ENCODE measurements at regions of chr10 and their contacts with region 1.

Region 1: GRCh38 chr10:91088300-91089140 is 131.9 kb upstream of the PCGF5 start:
- DNase-seq: no peak
- H3K4me3 ChIP-seq: no peak overlapping the region
- H3K27ac ChIP-seq: no peak overlapping the region
- H3K4me1 ChIP-seq: no peaks in the 10 kb centered on the region
- H3K27me3 ChIP-seq: no peaks in the 10 kb centered on the region
- CTCF ChIP-seq: no peak
- EP300 ChIP-seq: no peak
- POLR2A ChIP-seq: no peak
- RAD21 ChIP-seq: peak in 1 of 2 experiments; percentile 33; a peak in 3 of 4 replicates

Region 2: DNA sequence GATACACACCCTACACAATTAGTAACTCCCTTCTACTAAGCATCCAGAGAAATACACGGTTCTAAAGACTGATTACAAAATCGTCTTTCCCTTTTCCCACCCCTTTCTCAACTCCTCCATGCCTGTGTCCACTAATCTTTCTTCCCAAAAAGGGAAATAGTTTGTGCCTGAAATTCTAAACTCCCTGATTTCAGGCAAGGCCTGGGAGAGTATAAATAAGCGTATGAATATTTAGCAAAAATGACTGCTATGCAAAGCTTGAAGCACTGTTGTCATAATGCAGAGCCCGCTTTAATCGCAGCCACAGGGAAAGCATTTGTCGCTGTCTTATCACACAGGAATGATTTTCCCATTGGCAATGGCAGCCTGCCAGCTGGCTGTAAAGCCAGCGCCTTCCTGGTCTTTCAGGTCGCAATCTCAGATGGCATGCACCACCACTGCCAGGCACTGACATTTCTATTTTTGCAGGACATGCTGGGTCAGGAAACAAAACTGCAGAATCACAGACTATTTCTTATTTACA is 10.9 kb before region 1 on chr10:
- CTCF ChIA-PET with region 1: interaction called, 11 read pairs
- POLR2A ChIA-PET with region 1: no interaction called
- DNase-seq: no peak
- H3K4me3 ChIP-seq: no peak overlapping the region
- H3K27ac ChIP-seq: no peak overlapping the region
- H3K4me1 ChIP-seq: no peaks in the 10 kb centered on the region
- H3K27me3 ChIP-seq: no peaks in the 10 kb centered on the region
- CTCF ChIP-seq: no peak
- EP300 ChIP-seq: no peak
- POLR2A ChIP-seq: no peak
- RAD21 ChIP-seq: no peak